ENCODE measurements at regions of chr12 and their contacts with region 1.

Region 1: GRCh38 chr12:81329085-81329484 is 251.2 kb downstream of the ACSS3 start:
- DNase-seq: peak; percentile 15 to 49
- H3K4me3 ChIP-seq: no peak overlapping the region
- H3K27ac ChIP-seq: no peak overlapping the region
- H3K4me1 ChIP-seq: no peaks in the 10 kb centered on the region
- H3K27me3 ChIP-seq: peaks cover 0 to 1% (median 0%) of the 10 kb centered on the region in 4 experiments; a peak in 1 of 7 replicates
- CTCF ChIP-seq: peak; percentile 55 to 84 (median 59)
- EP300 ChIP-seq: no peak
- POLR2A ChIP-seq: no peak
- RAD21 ChIP-seq: peak; percentile 26 to 50; a peak in 3 of 4 replicates

Region 2: GRCh38 chr12:81274637-81275529 is 54.2 kb before region 1 on chr12:
- CTCF ChIA-PET with region 1: no interaction called
- POLR2A ChIA-PET with region 1: no interaction called
- DNase-seq: no peak
- H3K4me3 ChIP-seq: no peak overlapping the region
- H3K27ac ChIP-seq: no peak overlapping the region
- H3K4me1 ChIP-seq: no peaks in the 10 kb centered on the region
- H3K27me3 ChIP-seq: no peaks in the 10 kb centered on the region
- CTCF ChIP-seq: no peak
- EP300 ChIP-seq: no peak
- POLR2A ChIP-seq: no peak
- RAD21 ChIP-seq: no peak

Region 3: DNA sequence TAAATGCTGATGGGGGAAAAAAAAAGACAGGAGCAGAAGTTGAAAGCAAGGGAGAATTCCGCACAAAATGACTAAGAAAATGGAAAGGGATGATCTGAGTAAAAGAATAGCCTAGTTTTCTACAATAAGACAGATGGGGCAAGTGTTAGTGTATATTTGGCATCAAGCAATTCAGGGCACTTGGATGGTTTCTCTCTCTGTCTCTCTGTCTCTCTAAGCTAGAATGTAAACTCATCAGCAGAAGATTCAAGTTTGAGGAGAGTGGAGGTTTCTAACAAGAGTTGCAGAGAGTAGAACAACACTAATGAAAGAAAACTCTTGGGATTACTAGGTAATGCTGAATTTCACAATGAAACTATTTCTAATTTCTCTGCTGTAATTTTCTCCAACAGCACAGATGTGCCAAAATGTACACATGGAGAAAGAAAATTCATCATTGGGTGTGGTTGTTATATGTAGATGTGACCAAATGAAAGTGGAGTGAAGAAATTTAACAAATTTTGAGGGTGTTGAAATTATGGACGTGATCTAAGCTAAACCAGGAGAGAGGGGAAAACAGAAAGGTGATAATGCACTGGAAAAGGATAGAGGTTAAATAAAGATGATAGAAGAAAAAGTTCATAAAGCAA is 14.1 kb before region 1 on chr12:
- CTCF ChIA-PET with region 1: interaction called, 17 read pairs
- POLR2A ChIA-PET with region 1: no interaction called
- DNase-seq: no peak
- H3K4me3 ChIP-seq: no peak overlapping the region
- H3K27ac ChIP-seq: no peak overlapping the region
- H3K4me1 ChIP-seq: no peaks in the 10 kb centered on the region
- H3K27me3 ChIP-seq: no peaks in the 10 kb centered on the region
- CTCF ChIP-seq: no peak
- EP300 ChIP-seq: no peak
- POLR2A ChIP-seq: no peak
- RAD21 ChIP-seq: no peak